Activated CD8-positive, alpha-beta memory T cell treated with anti-CD3 and anti-CD28 coated beads, Interleukin-2, amount 10 ng/mL, durations not matched to agents 7 days and 5 days (primary cell): ENCODE measurements at regions of chr15 and their contacts with region 1.

Region 1: GRCh38 chr15:59528965-59529402 is 82.6 kb upstream of the GCNT3 start:
- DNase-seq: peak; percentile 80
- ATAC-seq: peak; percentile 88
- H3K4me3 Mint-ChIP-seq: no peak overlapping the region
- H3K27ac Mint-ChIP-seq: no peak overlapping the region
- H3K4me1 Mint-ChIP-seq: peaks cover 15% of the 10 kb centered on the region
- H3K27me3 Mint-ChIP-seq: peaks cover 33% of the 10 kb centered on the region

Region 2: DNA sequence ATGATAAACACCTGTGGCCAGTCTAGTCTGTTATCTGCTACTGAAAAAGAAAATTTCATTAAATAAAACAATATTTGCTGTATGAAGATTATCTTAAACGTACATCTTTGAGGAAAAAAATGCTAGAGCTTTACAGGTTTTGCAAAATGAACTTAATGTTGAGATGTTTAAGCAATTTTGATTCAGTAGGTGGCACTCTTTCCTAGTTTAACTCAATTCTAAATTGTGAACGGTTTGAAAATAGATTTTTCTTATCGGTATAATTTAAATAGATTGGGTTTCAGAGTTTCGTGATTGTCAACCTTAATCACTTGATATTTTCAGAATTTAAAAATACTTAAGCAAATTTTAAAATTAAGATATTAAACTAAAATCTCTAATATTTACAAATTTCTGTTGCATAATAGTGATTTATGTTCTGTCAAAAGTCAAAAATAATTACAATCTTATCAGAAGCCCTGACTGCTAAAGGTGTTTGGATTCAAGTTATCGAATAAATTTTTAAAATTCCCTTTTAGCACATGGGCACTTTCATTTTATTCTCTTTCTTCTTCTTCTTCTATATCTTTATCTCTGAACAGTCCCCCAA is 548.5 kb before region 1 on chr15:
- CTCF ChIA-PET with region 1: interaction called, 14 read pairs
- DNase-seq: no peak
- ATAC-seq: no peak
- H3K4me3 Mint-ChIP-seq: no peak overlapping the region
- H3K27ac Mint-ChIP-seq: peak overlapping the region; percentile 67
- H3K4me1 Mint-ChIP-seq: peaks cover 41% of the 10 kb centered on the region
- H3K27me3 Mint-ChIP-seq: peaks cover 4% of the 10 kb centered on the region

Region 3: DNA sequence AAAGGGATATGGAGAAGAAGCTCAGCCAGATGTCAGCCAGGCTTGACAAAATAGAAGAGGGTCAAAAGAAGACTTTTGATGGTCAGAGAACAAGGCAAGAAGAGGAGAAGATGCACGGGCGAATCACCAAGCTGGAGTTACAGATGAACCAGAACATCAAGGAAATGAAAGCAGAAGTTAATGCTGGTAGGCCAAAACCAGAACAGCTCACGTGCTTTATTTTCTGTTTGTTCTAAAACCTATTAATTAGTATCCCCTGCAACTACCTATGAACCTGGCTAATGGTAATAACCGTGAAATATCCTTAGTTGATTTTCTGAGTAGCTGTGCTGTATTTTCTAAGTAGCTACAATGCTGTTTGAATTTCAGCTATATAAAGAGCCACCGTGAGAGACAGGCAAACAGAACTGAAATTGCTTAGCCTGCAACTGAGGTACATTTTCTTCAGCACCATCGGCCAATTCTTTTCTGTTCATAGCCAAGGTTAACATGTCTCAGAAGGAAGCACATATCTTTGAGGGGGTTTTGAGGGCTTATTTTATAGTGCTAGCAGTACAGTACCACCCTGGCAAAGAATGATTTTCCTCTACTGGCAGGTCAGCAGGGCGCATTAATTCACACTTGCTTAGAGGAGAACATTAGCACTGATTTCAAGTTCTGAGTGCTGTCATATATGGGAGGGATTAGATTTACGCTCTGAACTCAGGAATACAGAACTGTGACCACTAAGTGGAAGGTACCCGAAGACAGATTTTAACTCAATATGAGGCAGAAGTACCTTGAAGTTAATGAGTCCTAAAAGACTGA is 12.1 kb before region 1 on chr15:
- CTCF ChIA-PET with region 1: interaction called, 22 read pairs
- DNase-seq: no peak
- ATAC-seq: no peak
- H3K4me3 Mint-ChIP-seq: no peak overlapping the region
- H3K27ac Mint-ChIP-seq: no peak overlapping the region
- H3K4me1 Mint-ChIP-seq: no peaks in the 10 kb centered on the region
- H3K27me3 Mint-ChIP-seq: peaks cover 27% of the 10 kb centered on the region

Region 4: GRCh38 chr15:59565299-59565698 is 36.3 kb after region 1 on chr15:
- CTCF ChIA-PET with region 1: no interaction called
- DNase-seq: no peak
- ATAC-seq: no peak
- H3K4me3 Mint-ChIP-seq: no peak overlapping the region
- H3K27ac Mint-ChIP-seq: no peak overlapping the region
- H3K4me1 Mint-ChIP-seq: peaks cover 21% of the 10 kb centered on the region
- H3K27me3 Mint-ChIP-seq: peaks cover 20% of the 10 kb centered on the region

Region 5: DNA sequence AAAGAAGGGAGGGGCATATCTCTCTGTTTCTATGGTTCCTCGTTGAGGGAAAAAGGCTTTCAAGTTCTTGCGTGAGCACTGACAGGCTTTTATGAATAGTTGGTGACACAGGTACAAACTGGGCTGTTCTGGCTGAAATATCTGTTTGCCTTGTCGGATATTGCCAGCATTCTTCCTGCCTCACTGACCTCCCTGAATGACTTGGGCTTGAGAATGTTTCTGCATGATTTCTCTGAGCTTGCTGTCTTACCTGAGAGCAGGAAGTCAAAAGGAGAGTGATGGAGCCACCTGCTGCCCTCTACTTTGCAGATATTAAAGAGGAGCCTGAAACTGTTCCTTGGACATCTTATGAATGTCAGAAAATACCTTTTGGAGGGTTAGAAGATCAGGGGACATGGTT is 87.4 kb after region 1 on chr15:
- CTCF ChIA-PET with region 1: interaction called, 19 read pairs
- DNase-seq: no peak
- ATAC-seq: no peak
- H3K4me3 Mint-ChIP-seq: no peak overlapping the region
- H3K27ac Mint-ChIP-seq: no peak overlapping the region
- H3K4me1 Mint-ChIP-seq: peaks cover 3% of the 10 kb centered on the region
- H3K27me3 Mint-ChIP-seq: peaks cover 45% of the 10 kb centered on the region

Region 6: GRCh38 chr15:59632714-59633113 is 103.7 kb after region 1 on chr15:
- CTCF ChIA-PET with region 1: interaction called, 12 read pairs
- DNase-seq: no peak
- ATAC-seq: no peak
- H3K4me3 Mint-ChIP-seq: no peak overlapping the region
- H3K27ac Mint-ChIP-seq: no peak overlapping the region
- H3K4me1 Mint-ChIP-seq: peaks cover 1% of the 10 kb centered on the region
- H3K27me3 Mint-ChIP-seq: peaks cover 12% of the 10 kb centered on the region